BJ (cell line): ENCODE measurements at regions of chr7 and their contacts with region 1.

Region 1: DNA sequence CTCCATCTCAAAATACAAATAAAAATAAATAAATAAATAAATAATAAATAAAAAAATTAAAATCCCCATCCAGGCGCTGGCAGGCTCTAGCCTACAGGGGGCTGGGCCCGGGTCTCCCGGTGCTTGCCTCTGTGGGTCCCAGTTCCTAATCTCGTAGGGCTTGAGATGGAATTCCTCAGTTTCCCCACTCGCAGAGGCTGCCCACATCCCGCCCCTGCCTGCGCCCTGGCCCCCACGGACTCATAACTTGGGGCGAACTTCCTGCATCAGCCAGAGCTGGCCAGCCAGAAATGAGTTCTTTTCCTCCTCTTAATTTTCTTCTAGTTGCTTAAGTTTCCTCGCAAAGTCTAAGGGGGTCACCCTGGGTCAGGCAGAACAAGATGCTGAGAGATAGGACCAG is 22.0 kb upstream of the SRRM3 start:
- DNase-seq: no peak
- H3K4me3 ChIP-seq: no peak overlapping the region
- H3K27me3 ChIP-seq: no peaks in the 10 kb centered on the region
- CTCF ChIP-seq: no peak

Region 2: GRCh38 chr7:75966190-75966961 is 213.3 kb before region 1 on chr7:
- CTCF ChIA-PET with region 1: no interaction called
- POLR2A ChIA-PET with region 1: no interaction called
- DNase-seq: peak; percentile 49
- H3K4me3 ChIP-seq: no peak overlapping the region
- H3K27me3 ChIP-seq: no peaks in the 10 kb centered on the region
- CTCF ChIP-seq: no peak

Region 3: DNA sequence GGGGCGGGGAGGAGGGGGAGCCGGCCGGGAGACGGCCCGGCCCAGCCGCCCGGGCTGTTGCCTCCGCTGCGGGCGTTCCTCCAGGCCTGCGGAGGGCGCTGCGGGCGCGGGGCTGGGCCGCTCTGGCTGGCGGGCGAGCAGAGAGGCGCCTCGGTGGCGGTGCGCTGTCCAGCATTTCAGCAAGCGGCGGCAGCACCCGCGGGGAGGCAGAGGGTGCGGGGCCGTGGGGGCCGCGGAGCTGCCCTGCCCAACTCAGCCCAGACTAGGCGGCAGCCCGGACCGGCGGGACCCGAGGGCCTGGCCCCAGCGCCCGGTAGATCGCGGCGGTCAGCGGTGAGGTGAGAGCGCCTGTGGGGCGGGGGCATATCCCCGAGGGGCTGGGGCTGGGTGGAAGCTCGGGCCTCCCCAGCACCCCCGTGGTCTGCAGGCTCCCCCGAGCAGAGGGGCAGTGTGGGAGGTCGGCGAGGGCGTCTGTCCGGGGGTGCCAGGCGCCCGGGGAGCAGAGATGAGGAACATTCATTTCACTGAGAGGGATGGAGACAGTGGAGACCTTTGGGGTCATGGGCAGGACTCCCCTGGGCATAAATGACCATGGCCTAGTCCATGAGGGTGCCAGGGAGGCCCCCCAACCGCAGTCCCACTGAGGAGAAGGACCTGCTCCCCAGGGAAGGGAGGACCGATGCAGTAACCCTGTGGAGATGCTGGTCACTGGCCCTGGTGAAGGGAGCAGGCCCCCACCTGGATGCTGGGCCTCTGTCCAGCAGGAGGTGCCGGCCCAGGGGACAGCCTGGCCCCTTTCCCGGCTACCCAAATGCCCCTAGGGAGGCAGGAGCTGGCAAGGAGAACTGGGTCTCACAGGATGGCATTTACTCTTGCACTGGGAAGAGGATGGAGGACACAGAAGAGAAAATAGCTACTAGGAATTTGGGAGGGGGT is 22.3 kb after region 1 on chr7 and contains the start of gene SRRM3:
- CTCF ChIA-PET with region 1: interaction called, 10 read pairs
- POLR2A ChIA-PET with region 1: no interaction called
- DNase-seq: no peak
- H3K4me3 ChIP-seq: no peak within 1 kb of the TSS
- H3K27me3 ChIP-seq: no peaks in the 10 kb centered on the region
- CTCF ChIP-seq: peak; percentile 28; the same call in 1 of the 2 replicates
- polyA plus RNA-seq, gene SRRM3: 0.48 and 0.80 TPM in 2 replicates

Region 4: GRCh38 chr7:76282344-76283253 is 102.9 kb after region 1 on chr7:
- CTCF ChIA-PET with region 1: interaction called, 15 read pairs
- POLR2A ChIA-PET with region 1: no interaction called
- DNase-seq: no peak
- H3K4me3 ChIP-seq: peak overlapping the region; percentile 36
- H3K27me3 ChIP-seq: peaks cover 26% of the 10 kb centered on the region
- CTCF ChIP-seq: no peak

Region 5: GRCh38 chr7:76297387-76297756 is 117.7 kb after region 1 on chr7:
- CTCF ChIA-PET with region 1: interaction called, 15 read pairs
- POLR2A ChIA-PET with region 1: no interaction called
- DNase-seq: peak; percentile 74
- H3K4me3 ChIP-seq: no peak overlapping the region
- H3K27me3 ChIP-seq: no peaks in the 10 kb centered on the region
- CTCF ChIP-seq: no peak

Region 6: DNA sequence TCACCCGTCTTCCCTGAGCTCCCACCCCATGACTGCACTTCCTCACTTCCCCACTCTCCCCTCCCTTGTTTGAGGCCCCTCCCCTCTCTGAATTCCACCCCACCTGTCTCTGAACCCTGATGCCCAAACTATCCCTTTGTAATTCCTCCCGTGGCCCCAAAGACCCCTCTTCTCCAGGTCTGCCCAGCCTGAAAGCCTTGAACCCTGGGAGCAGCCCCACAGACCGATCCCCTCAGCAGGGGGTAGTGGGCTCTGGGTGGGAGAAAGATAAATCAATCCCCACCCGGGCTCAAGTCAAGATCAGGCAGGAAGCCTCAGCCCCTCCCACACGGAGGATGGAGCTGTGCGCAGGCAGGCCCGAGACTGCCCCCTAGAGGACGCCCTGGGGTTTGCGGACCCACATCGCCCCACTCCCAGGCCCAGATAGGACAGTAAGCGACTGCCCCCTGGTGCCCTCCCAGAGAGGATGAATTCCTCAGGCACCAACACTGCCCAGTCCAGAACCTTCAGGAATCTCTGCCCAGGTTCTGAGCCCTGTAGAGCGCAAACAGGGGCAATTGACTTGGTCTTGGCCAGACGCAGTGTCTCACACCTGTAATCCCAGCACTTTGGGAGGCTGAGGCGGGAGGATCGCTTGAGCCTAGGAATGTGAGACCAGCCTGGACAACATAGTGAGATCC is 134.5 kb after region 1 on chr7:
- CTCF ChIA-PET with region 1: interaction called, 217 read pairs
- POLR2A ChIA-PET with region 1: no interaction called
- DNase-seq: no peak
- H3K4me3 ChIP-seq: no peak overlapping the region
- H3K27me3 ChIP-seq: no peaks in the 10 kb centered on the region
- CTCF ChIP-seq: peak; percentile 100